Posterior vena cava (tissue), 2 donors: ENCODE measurements at regions of chr4 and their contacts with region 1.

Region 1: GRCh38 chr4:169659716-169660670 is 39.6 kb downstream of the CLCN3 start:
- DNase-seq: no peak

Region 2: DNA sequence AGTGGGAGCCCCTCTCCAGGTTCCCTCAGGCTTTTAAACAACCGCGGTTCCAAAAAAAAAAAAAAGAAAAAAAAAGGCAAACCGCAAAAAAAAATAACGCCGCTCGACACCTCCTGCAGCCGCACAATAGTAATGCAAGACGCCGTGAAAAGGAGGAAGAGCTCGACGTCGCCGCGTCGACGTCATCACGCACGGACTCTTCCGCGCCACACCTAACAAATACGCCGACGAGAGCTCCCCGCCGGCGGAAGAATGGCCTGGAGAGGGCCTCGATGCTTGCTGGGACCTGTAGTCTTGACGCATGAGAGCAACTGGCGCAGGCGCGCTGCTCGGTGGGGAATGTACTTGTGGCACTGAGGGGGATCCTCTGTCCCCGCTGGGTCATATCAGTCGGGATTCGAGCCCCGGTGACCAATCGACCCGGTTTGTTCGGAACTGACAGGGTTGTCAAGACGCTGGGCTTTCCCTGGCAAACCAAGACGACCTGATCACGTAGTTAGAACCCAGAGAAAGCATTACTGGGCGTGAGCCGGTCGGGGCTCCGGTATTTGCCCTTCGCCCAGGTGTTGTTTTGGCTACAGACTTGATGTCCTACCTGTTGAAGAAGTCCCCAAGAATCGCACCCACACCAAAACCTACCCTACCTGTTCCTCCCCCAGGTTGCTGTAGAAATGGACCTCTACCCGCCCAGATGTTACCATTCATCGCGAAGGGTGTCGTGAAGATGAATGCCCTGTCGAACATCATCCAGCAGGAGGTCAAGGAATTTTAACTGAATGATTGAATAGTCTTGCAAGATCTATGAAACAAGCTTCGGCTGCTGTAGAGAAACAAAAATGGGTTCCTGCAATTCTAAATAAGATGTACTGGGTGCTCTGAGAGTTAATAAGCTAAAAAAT is 649.6 kb before region 1 on chr4 and contains the start of gene CBR4:
- intact Hi-C with region 1: no loop called
- DNase-seq: peak; percentile 99
- total RNA-seq, gene CBR4: 13.9 to 17.5 TPM

Region 3: DNA sequence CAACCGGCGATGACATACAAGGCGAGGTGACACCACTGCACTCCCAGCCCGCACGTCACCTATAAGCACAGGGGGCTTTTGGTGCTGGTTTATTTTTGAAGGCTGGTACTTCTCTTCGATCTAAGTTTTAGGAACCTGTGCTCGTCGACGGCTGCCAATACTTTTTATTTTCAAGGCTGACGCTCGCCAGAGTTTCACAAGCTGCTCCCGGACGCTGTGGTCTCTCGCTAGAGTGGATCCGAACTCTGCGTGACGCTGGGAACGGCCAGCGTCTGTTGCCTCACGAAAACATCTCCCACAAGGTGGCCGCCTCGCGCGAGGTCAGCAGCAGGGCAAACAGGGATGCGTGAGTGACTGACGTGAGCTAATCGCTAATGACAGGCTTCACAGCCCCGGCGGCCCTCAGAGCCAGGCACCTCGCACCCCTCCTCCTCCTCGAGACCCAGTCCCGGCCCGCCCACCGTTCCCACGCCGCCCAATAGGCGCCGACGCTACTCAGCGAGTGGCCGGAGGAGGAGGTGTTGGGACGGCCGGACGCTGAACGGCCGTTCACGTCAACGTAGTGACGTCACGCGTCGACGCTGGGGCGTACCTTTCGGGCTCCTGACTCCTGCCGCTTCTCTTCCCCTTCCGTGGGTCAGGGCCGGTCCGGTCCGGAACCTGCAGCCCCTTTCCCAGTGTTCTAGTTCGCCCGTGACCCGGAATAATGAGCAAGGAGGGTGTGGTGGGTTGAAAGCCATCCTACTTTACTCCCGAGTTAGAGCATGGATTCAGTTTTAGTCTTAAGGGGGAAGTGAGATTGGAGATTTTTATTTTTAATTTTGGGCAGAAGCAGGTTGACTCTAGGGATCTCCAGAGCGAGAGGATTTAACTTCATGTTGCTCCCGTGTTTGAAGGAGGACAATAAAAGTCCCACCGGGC is 39.8 kb before region 1 on chr4 and contains the start of gene CLCN3:
- intact Hi-C with region 1: loop called in 1 of 2 experiments (anchors 5 kb)
- DNase-seq: peak; percentile 99
- total RNA-seq, gene CLCN3: 17.0 to 23.3 TPM

Region 4: GRCh38 chr4:169640261-169640870 is 19.6 kb before region 1 on chr4:
- intact Hi-C with region 1: no loop called
- DNase-seq: no peak